Activated CD4-positive, alpha-beta memory T cell treated with anti-CD3 and anti-CD28 coated beads for 36 hours (primary cell): ENCODE measurements at regions of chr11 and their contacts with region 1.

Region 1: DNA sequence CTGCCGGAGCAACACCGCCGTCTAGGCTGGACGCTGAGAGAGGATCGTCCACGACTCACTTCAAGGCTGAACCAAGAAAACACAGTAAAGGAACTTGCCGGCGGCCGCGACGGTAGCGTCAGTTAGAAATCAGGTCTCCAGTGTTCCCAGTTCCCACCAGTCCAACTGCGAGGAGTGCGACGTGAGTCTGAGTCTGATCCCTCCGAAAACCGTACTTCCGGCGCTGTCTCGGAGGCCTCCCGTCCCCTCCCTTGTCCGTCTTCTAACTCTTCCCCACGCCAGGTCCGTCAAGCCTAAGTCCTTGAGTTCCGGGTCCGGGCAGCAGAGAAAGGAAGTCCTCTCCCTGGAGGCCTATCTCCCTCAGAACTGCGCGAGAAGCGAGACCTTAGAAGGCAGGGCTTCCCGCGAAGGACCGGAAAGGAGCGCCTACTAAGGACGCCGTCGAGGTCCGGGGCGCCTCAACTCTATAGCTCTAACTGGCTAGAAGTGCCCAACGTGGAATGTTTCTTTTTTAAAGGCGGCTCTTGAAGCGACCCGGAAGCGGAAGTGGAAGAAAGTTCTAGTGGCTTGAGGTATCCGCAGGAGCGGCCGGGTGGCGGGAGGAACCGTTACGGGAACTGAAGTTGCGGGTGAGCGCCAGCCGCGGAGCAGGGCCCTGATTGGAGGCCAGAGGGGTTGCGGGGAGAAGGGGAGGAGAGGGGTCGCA is at the starts of genes BANF1 and EIF1AD:
- DNase-seq: peak; percentile 97
- H3K4me3 Mint-ChIP-seq: peak within 1 kb of the TSS; percentile 99
- H3K27ac Mint-ChIP-seq: peak within 1 kb of the TSS; percentile 99
- H3K4me1 Mint-ChIP-seq: peaks cover 38% of the 10 kb centered on the region
- H3K27me3 Mint-ChIP-seq: no peaks in the 10 kb centered on the region
- total RNA-seq, gene BANF1: 264 to 280 TPM
- total RNA-seq, gene EIF1AD: 41.2 to 42.7 TPM

Region 2: GRCh38 chr11:65961232-65961901 is 40.7 kb before region 1 on chr11 and contains the start of gene SART1:
- CTCF ChIA-PET with region 1: no interaction called
- POLR2A ChIA-PET with region 1: interaction called, 4 read pairs
- intact Hi-C with region 1: loop called (anchors 1 kb)
- DNase-seq: peak; percentile 98
- H3K4me3 Mint-ChIP-seq: peak within 1 kb of the TSS; percentile 95
- H3K27ac Mint-ChIP-seq: peak within 1 kb of the TSS; percentile 94
- H3K4me1 Mint-ChIP-seq: peaks cover 43% of the 10 kb centered on the region
- H3K27me3 Mint-ChIP-seq: no peaks in the 10 kb centered on the region
- total RNA-seq, gene SART1: 59.1 to 60.5 TPM

Region 3: DNA sequence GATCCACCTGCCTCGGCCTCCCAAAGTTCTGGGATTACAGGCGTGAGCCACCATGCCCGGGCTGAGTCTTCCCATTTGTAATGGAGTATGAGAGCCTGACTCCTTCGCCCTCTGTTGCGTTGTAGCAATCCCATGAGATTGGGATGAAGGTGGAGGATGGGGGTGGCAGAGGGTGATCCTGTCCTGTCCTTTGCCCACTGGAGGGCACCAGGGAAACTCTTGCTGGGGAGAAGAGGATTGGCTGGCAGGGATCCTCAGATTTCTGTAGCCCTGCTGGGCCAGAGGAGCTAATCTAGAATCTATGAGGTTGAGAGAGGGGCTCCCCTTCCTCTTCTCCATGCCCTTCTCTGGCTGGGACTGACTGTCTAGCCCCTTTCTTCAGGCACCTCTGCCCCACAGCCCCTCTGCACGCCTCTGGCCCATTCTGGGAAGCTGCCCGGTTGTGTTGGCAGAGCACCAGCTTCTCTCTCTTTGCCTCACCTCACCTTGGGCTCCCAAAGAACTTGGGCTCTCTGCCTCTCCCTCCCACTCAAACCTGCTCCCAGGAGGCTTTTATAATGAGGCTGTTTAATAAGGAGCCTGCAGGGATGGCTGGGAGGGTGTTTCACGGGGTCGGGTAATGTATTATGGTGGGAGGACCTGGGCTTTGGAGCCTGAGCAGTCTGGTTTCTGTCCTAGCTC is 33.7 kb after region 1 on chr11:
- CTCF ChIA-PET with region 1: no interaction called
- POLR2A ChIA-PET with region 1: no interaction called
- intact Hi-C with region 1: no loop called
- DNase-seq: no peak
- H3K4me3 Mint-ChIP-seq: no peak overlapping the region
- H3K27ac Mint-ChIP-seq: no peak overlapping the region
- H3K4me1 Mint-ChIP-seq: no peaks in the 10 kb centered on the region
- H3K27me3 Mint-ChIP-seq: peaks cover 2% of the 10 kb centered on the region

Region 4: GRCh38 chr11:66051766-66052663 is 49.9 kb after region 1 on chr11 and contains the start of gene SF3B2:
- CTCF ChIA-PET with region 1: interaction called, 3 read pairs
- POLR2A ChIA-PET with region 1: interaction called, 8 read pairs
- intact Hi-C with region 1: loop called (anchors 1 kb)
- DNase-seq: peak; percentile 99
- H3K4me3 Mint-ChIP-seq: peak within 1 kb of the TSS; percentile 100
- H3K27ac Mint-ChIP-seq: peak within 1 kb of the TSS; percentile 97
- H3K4me1 Mint-ChIP-seq: peaks cover 41% of the 10 kb centered on the region
- H3K27me3 Mint-ChIP-seq: peaks cover 5% of the 10 kb centered on the region
- total RNA-seq, gene SF3B2: 271 to 274 TPM

Region 5: GRCh38 chr11:66136752-66137123 is 134.6 kb after region 1 on chr11:
- CTCF ChIA-PET with region 1: interaction called, 4 read pairs
- POLR2A ChIA-PET with region 1: no interaction called
- intact Hi-C with region 1: loop called (anchors 5 kb)
- DNase-seq: peak; percentile 48
- H3K4me3 Mint-ChIP-seq: no peak overlapping the region
- H3K27ac Mint-ChIP-seq: peak overlapping the region; percentile 65
- H3K4me1 Mint-ChIP-seq: peaks cover 65% of the 10 kb centered on the region
- H3K27me3 Mint-ChIP-seq: no peaks in the 10 kb centered on the region

Region 6: GRCh38 chr11:66159324-66159984 is 157.4 kb after region 1 on chr11:
- CTCF ChIA-PET with region 1: no interaction called
- POLR2A ChIA-PET with region 1: no interaction called
- intact Hi-C with region 1: no loop called
- DNase-seq: no peak
- H3K4me3 Mint-ChIP-seq: no peak overlapping the region
- H3K27ac Mint-ChIP-seq: no peak overlapping the region
- H3K4me1 Mint-ChIP-seq: peaks cover 54% of the 10 kb centered on the region
- H3K27me3 Mint-ChIP-seq: no peaks in the 10 kb centered on the region